G401 (cell line): ENCODE measurements at regions of chr21 and their contacts with region 1.

Region 1: DNA sequence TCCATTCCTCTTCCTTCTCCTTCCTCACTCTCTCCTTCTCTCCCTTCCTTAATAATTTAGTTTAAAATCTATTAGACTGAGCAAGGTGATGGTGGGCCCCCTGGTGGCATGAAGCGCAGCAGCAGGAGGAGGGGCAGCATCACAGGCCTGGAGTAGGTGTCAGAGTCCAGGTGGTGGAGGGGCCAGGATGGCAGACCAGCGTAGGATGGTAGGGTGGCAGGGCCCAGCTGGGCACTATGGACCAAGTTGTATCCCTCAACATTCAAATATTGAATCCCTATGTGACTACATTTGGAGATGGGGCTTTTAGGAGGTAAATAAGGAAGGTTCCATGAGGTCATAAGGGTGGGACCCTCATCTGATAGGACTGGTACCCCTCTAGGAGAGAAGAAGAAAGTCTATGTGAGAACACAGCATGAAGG is 61.0 kb downstream of the WDR4 start:
- DNase-seq: peak; percentile 58

Region 2: GRCh38 chr21:42593007-42593806 is 225.1 kb before region 1 on chr21:
- in situ Hi-C with region 1: loop called (anchors 10 kb)
- DNase-seq: peak; percentile 82

Region 3: DNA sequence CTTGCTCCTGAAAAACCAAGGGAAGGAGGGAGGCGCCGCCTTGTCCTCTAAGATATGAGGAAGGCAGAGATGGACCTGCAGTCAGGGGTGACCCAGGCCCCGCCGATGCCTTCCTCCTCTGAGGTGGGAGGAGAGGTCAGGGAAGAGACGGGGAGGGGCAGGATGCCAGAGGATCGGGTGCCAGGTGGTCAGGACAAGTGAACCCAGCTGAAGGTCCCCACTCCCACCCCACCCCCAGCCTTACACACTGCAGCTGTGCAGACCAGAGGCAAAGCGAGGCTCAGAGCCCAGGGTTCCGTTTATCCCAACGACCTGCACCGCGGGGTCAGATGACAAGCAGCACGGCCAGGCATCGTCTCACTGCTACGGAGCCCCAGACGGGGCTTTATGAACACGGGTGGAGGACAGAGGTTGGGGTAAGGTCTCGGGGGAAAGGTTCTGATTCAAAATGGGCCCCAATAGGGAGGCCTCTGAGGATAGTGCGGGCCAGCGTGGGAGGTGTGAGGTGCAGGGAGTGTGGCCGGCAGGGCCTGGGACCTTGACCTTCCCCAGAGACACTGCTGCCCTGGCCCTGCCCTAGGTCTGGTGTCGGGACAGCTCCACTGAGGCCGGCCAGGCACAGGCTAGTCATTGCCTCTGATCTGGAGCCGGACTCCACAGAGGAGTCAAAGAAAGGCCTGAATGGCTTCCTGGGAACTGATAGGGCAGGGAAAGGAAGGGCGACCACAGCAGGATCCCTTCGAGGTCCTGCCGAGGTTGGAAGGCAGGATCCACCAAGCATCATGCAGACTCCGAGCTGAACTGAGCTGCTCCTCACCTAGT is 51.4 kb before region 1 on chr21:
- in situ Hi-C with region 1: no loop called
- DNase-seq: no peak